CD4-positive, alpha-beta memory T cell (primary cell): ENCODE measurements at regions of chr1 and their contacts with region 1.

Region 1: DNA sequence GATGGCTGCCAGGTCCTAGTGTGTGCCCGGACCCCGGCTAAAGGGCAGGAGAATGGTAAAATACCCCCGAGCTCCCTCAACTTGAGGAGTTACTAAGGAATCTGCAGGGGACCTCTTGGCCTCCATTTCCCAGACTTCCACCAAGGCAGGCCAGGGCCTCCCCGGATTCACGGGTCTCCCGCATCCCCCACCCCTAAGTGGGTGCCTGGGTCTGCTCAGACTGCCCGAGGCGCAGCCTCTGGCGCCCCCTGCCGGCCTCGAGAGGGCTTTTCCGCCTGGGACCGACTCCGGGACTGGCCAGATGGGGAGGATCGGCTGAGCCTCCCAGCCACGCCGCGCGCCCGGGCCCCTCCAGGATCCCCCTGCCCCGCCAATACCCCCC is 1.7 kb downstream of the PLEKHG5 start:
- DNase-seq: peak; percentile 73 to 80 (median 77)
- H3K4me3 ChIP-seq: peak overlapping the region; percentile 78 to 80
- H3K4me3 Mint-ChIP-seq: peak overlapping the region; percentile 69 to 87 (median 81)
- H3K27ac ChIP-seq: peak overlapping the region; percentile 57
- H3K27ac Mint-ChIP-seq: peak overlapping the region in 3 of 7 donors; percentile 47 to 72 (median 59)
- H3K4me1 ChIP-seq: peaks cover 28% of the 10 kb centered on the region
- H3K4me1 Mint-ChIP-seq: peaks cover 15 to 53% (median 31%) of the 10 kb centered on the region in 4 donors
- H3K27me3 ChIP-seq: peaks cover 10% of the 10 kb centered on the region
- H3K27me3 Mint-ChIP-seq: peaks cover 6 to 9% of the 10 kb centered on the region in 2 donors

Region 2: DNA sequence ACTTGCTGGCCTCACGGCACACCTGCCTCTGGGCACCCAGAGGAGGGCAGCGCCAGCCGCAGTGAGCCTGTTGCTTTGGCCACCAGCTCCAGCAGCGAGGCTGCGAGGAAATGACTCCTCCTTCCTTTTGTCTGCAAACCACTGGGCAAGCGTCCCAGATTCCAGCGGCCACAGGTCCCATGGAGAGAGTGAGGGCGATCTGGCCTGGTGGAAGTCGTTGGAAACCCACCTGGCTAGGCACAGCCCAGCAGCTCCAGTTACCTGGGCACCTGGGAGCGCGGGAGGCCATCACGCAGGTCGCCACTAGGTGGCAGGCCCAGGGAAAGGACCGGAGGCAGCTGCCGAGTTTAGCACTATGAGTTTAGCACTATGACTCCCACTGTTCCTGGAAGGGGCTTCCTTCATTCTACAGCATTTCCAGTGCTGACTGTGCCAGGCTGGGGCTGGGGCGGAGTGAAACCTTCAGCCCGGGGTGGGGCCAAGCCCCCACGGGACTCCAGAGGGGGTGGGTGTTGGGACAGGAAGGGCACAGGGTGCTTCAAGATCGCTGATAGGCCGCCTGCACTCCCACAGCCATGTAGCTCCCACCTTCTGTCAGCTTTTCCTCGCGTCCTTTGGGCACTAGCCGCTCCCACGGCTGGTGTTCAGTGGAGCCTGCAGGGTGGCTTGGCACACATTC is 66.3 kb before region 1 on chr1:
- CTCF ChIA-PET with region 1: interaction called, 30 read pairs
- POLR2A ChIA-PET with region 1: interaction called, 4 read pairs
- intact Hi-C with region 1: loop called (anchors 1 kb)
- DNase-seq: peak; percentile 64 to 74 (median 69)
- H3K4me3 ChIP-seq: peak overlapping the region in 1 of 2 donors; percentile 38
- H3K4me3 Mint-ChIP-seq: peak overlapping the region; percentile 46 to 76 (median 68)
- H3K27ac ChIP-seq: no peak overlapping the region
- H3K27ac Mint-ChIP-seq: no peak overlapping the region
- H3K4me1 ChIP-seq: peaks cover 35% of the 10 kb centered on the region
- H3K4me1 Mint-ChIP-seq: peaks cover 6 to 35% (median 19%) of the 10 kb centered on the region in 4 donors
- H3K27me3 ChIP-seq: peaks cover 37% of the 10 kb centered on the region
- H3K27me3 Mint-ChIP-seq: peaks cover 22 to 24% of the 10 kb centered on the region in 2 donors

Region 3: DNA sequence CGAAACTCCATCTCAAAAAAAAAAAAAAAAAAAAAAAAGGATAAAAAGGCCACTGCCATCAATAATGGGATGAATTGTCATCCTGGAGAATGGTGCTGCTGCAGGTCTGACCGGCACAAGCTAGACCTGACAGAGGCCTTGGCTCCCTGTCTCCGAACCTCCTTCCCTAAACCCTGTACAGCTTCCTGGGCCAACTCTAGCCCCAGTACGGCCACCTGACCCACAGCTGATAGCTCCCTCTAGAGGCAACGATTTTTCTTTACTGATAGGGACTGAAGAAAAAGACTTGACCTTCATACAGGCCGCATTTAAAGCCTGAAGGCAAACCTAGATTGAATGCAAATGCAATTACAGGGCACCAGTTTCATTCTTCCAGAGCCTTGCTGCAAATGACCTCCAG is 33.8 kb after region 1 on chr1:
- CTCF ChIA-PET with region 1: interaction called, 19 read pairs
- POLR2A ChIA-PET with region 1: no interaction called
- intact Hi-C with region 1: no loop called
- DNase-seq: no peak
- H3K4me3 ChIP-seq: no peak overlapping the region
- H3K4me3 Mint-ChIP-seq: no peak overlapping the region
- H3K27ac ChIP-seq: no peak overlapping the region
- H3K27ac Mint-ChIP-seq: peak overlapping the region in 4 of 7 donors; percentile 11 to 52 (median 38)
- H3K4me1 ChIP-seq: no peaks in the 10 kb centered on the region
- H3K4me1 Mint-ChIP-seq: peaks cover 0 to 4% (median 2%) of the 10 kb centered on the region in 4 donors
- H3K27me3 ChIP-seq: no peaks in the 10 kb centered on the region
- H3K27me3 Mint-ChIP-seq: no peaks in the 10 kb centered on the region

Region 4: GRCh38 chr1:6547301-6547700 is 57.5 kb after region 1 on chr1:
- CTCF ChIA-PET with region 1: interaction called, 86 read pairs
- POLR2A ChIA-PET with region 1: interaction called, 38 read pairs
- intact Hi-C with region 1: no loop called
- DNase-seq: no peak
- H3K4me3 ChIP-seq: no peak overlapping the region
- H3K4me3 Mint-ChIP-seq: peak overlapping the region in 6 of 8 donors; percentile 43 to 82 (median 64)
- H3K27ac ChIP-seq: peak overlapping the region; percentile 49
- H3K27ac Mint-ChIP-seq: peak overlapping the region; percentile 78 to 97 (median 87)
- H3K4me1 ChIP-seq: peaks cover 33% of the 10 kb centered on the region
- H3K4me1 Mint-ChIP-seq: peaks cover 28 to 40% (median 31%) of the 10 kb centered on the region in 4 donors
- H3K27me3 ChIP-seq: no peaks in the 10 kb centered on the region
- H3K27me3 Mint-ChIP-seq: no peaks in the 10 kb centered on the region